Activated CD4-positive, alpha-beta memory T cell treated with anti-CD3 and anti-CD28 coated beads for 36 hours (primary cell): ENCODE measurements at regions of chr17 and their contacts with region 1.

Region 1: DNA sequence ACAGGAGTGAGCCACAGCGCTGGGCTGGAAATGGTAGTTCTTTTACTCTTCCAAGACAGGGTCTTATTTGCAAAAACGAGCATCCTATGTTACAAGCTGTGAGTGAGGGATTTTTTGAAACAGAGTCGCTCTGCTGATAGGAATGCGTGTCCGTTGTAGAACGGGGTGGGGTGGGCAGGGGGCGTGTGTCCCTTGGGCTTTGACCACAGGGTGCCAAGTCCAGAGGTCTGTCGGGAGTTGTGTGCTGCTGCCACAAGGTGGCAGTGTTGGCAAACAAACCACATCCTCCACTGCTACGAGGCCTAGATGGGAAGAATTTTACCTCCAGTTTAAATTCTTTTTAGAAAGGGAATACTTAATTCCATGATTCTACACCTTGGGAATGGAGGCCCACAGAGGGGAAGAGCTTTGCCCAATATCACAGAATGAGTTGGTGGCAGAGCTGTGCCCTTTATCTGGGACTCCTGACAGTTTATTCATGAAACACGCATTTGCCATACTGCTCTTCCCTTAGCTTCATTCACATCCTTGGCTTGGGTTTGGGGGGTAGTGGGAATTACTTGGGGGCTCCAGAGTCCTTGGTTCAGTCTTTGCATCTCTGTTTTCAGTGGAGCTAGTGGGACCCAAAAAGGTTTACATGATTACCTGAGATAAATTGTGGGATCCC is 30.6 kb upstream of the ETV4 start:
- DNase-seq: peak; percentile 76
- H3K4me3 Mint-ChIP-seq: no peak overlapping the region
- H3K27ac Mint-ChIP-seq: peak overlapping the region; percentile 44
- H3K4me1 Mint-ChIP-seq: peaks cover 15% of the 10 kb centered on the region
- H3K27me3 Mint-ChIP-seq: peaks cover 2% of the 10 kb centered on the region

Region 2: DNA sequence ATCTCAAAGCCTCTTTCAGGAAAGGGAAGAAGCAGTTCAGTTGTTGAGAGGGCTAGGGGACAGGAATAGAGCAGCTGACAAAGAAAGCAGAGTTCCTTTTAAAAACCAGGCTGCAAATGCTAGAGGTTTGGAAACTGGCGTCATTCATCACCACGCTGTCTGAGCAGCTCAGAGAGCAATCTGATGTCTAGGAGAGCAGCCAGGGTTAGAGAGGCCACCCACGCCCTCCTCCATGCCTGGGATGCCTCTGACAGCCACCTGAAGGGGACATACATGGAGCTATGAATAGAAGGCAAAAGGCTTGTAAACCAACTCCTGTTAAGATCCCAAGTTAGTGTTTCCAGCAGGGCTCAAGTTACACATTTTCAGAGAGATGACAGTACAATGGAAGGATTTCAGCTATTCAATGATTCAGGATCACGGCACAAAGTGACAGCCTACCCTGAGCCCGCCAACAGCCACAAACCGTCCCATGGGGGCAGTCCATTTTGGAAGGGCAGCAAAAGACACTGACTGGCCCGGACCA is 1434.3 kb before region 1 on chr17:
- CTCF ChIA-PET with region 1: no interaction called
- POLR2A ChIA-PET with region 1: no interaction called
- intact Hi-C with region 1: no loop called
- DNase-seq: no peak
- H3K4me3 Mint-ChIP-seq: no peak overlapping the region
- H3K27ac Mint-ChIP-seq: no peak overlapping the region
- H3K4me1 Mint-ChIP-seq: peaks cover 31% of the 10 kb centered on the region
- H3K27me3 Mint-ChIP-seq: no peaks in the 10 kb centered on the region

Region 3: DNA sequence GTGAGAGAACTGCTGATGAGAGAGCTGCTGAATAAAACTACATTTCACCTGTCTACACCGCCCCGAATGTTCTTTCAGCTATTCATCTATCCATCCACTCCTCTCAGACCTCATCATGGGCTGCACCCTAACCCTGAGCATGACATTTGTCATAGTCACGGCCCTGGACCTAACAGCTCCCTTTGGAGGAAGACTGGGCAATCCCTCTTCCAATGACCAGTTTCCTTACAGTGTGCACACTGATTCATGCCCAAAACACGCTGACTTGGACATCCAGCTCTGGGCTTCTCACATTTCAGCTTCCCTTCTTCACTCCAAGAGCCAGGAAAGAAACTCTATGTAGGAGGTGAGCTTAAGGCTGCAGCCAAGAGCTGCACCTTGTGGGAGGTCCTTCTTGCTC is 219.7 kb before region 1 on chr17:
- CTCF ChIA-PET with region 1: no interaction called
- POLR2A ChIA-PET with region 1: no interaction called
- intact Hi-C with region 1: no loop called
- DNase-seq: no peak
- H3K4me3 Mint-ChIP-seq: no peak overlapping the region
- H3K27ac Mint-ChIP-seq: no peak overlapping the region
- H3K4me1 Mint-ChIP-seq: peaks cover 27% of the 10 kb centered on the region
- H3K27me3 Mint-ChIP-seq: peaks cover 11% of the 10 kb centered on the region

Region 4: DNA sequence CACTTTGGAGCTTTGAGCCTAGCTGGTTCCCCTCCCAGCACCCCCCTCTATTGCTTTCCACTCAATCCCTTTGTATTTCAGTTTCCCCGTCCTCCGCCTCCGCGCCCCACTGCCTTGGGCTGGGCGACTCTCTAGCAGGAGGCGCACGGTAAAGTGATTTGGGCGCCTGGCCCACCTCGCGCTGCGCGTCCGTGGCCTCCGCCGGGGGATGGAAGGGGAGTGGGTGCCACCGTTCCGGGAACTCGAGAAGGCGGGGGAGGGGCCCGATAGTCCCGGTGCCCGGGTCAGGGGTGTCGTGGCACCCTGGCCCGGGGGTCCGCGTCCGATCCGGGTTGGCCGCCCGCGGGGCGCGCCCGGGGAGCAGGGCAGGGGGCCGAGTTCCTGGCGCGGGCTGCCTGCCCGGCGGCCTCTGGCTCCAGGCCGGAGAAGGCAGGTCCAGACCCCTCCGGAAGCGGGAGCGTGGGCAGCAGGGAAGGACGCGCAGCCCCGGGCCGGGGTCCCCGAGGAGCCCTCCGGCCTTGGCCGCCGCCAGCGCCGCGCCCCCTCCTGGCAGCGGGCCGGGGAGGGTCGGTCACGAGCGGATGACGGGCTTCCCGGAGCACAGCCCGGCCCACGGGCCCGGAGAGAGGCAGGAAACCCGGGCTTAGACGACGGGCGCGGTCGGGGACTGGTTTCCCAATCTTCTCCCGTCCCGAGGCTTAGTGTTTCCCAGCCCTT is 69.2 kb after region 1 on chr17:
- CTCF ChIA-PET with region 1: interaction called, 11 read pairs
- POLR2A ChIA-PET with region 1: interaction called, 4 read pairs
- intact Hi-C with region 1: no loop called
- DNase-seq: peak; percentile 34
- H3K4me3 Mint-ChIP-seq: no peak overlapping the region
- H3K27ac Mint-ChIP-seq: no peak overlapping the region
- H3K4me1 Mint-ChIP-seq: peaks cover 22% of the 10 kb centered on the region
- H3K27me3 Mint-ChIP-seq: peaks cover 5% of the 10 kb centered on the region

Region 5: DNA sequence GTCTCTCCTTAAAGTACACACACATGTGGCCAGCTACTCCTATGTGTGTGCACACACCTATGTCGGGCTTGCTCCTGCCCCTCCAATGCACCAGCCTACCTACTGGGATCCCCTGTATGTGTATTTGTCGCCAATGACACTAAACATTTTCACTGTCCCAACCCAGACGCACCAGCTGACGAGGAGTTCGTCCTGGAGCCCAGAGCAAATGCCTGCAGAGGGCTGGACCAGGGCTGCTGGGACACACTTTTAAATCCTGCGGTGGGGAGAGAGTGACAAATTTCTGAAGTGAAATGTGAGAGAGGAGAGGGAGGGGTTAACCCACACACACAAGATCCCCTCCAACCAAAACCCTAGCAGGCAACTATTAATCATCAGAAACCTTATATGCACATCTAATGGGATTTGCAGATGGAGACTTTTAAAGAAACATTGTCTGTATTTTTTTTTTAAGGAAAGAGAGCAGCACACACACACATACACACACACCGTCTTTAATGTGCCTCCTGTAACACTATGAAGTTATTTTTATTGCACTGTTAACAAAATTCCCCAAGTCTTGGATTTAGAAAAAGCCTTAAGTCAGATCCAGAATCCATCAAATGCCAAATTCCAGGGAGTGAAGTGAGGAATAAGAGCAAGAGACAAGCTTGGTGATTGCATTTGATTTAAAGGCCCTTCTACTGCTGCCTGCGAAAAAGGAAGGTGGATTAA is 85.2 kb after region 1 on chr17 and contains the start of gene MEOX1:
- CTCF ChIA-PET with region 1: interaction called, 16 read pairs
- POLR2A ChIA-PET with region 1: no interaction called
- intact Hi-C with region 1: no loop called
- DNase-seq: peak; percentile 66
- H3K4me3 Mint-ChIP-seq: peak within 1 kb of the TSS; percentile 64
- H3K27ac Mint-ChIP-seq: peak within 1 kb of the TSS; percentile 47
- H3K4me1 Mint-ChIP-seq: peaks cover 44% of the 10 kb centered on the region
- H3K27me3 Mint-ChIP-seq: peaks cover 3% of the 10 kb centered on the region
- total RNA-seq, gene MEOX1: 0.34 to 0.67 TPM

Region 6: DNA sequence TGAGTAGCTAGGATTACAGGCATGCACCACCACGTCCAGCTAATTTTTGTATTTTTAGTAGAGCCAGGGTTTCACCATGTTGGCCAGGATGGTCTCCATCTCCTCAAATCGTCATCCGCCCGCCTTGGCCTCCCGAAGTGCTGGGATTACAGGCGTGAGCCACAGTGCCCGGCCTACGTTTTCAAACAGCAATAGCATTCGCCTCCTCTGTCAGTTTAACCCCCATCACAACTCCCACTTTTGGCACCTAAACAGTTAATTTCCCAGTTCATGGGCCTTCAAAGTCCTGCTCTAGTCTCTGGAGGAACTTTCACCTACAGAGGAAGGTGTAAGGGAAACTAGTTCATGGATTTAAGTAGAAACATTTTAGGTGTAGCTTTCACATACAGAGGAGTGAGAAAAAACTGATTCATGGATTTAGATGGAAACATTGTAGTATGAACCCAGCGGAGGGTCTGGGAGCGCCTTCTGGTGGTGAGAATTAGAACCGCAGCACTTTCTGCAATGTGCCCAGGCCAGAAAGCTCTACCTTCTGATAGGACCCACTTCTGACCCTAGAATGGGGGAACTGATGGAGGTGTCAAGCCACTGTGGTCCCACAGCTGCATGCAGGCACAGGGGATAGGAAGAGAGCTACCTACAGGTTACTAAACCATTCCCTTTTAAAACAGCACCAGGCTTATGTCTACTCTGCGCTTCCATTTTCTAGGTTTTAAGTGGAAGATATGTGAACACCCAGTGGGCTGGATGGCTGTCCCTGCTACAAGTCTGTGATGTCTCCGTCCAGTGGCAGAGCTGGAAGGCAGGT is 97.0 kb after region 1 on chr17:
- CTCF ChIA-PET with region 1: interaction called, 7 read pairs
- POLR2A ChIA-PET with region 1: interaction called, 3 read pairs
- intact Hi-C with region 1: loop called (anchors 1 kb)
- DNase-seq: peak; percentile 85
- H3K4me3 Mint-ChIP-seq: no peak overlapping the region
- H3K27ac Mint-ChIP-seq: no peak overlapping the region
- H3K4me1 Mint-ChIP-seq: peaks cover 12% of the 10 kb centered on the region
- H3K27me3 Mint-ChIP-seq: no peaks in the 10 kb centered on the region

Region 7: DNA sequence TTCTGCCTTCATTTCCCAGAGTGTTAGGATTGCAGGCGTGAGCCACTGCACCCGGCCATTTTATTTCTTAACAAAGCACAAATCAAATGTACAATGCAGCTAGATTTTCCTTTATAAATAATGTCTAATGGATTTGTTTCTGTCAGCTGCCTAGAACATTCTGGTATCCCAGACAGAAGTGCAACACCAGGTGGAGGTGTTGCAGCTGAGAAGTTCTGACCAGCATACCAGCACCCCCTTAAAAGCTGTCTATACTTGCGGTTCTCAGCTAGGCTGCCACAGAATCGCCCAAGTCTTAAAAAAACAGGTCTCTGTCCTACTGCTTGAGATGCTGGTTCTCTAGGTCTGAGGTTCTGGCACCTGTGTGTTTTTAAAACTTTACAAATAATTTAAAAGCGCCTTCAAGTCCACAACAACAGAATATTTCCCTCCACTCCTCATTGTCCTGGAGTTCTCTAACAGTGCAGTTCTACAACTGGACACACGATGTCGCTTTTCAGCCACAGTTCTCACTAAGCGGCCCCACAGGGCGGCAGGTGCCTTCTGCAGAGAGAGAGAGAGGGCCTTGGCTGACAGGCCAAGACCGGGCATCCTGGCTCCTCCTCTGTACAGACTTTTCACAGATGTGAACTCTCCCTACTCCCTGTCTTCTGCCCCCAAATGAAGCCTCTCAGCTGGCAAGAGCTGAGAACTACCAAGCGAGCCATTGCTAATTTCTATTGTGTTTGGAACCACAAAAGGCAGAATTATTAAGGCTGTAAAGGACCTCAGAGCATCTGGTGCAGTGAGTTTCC is 117.6 kb after region 1 on chr17:
- CTCF ChIA-PET with region 1: interaction called, 17 read pairs
- POLR2A ChIA-PET with region 1: no interaction called
- intact Hi-C with region 1: no loop called
- DNase-seq: peak; percentile 82
- H3K4me3 Mint-ChIP-seq: peak overlapping the region; percentile 1
- H3K27ac Mint-ChIP-seq: no peak overlapping the region
- H3K4me1 Mint-ChIP-seq: no peaks in the 10 kb centered on the region
- H3K27me3 Mint-ChIP-seq: no peaks in the 10 kb centered on the region

Region 8: DNA sequence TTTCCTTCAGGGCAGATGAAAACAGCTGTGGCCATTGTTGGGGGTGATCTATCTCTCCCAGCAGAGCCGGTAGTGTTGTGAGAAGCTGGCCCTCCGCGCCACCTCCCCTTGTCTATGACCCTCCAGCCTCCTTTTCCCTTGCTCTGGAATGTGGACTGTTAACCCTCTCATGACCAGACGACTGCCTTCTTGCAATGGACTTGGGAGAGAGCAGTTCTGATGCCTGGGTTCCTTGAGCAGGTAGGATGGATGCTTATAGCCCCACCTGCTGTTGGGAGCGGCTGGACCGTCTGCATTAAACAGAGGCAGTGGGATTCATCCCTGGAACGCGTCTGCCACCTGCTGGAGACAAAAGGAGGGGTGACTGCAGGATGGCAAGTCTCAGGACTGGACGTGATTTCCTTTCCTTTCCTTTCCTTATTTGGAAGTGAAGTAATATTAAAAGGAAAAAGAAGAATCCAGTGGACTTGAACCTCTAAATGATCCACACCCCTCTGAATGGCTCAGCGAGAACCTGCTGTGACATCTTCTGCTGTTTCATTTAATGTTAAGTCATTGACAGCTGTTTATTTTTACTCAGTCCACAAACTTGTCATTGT is 183.7 kb after region 1 on chr17:
- CTCF ChIA-PET with region 1: interaction called, 42 read pairs
- POLR2A ChIA-PET with region 1: no interaction called
- intact Hi-C with region 1: loop called (anchors 1 kb)
- DNase-seq: peak; percentile 94
- H3K4me3 Mint-ChIP-seq: no peak overlapping the region
- H3K27ac Mint-ChIP-seq: no peak overlapping the region
- H3K4me1 Mint-ChIP-seq: no peaks in the 10 kb centered on the region
- H3K27me3 Mint-ChIP-seq: peaks cover 23% of the 10 kb centered on the region

Region 9: DNA sequence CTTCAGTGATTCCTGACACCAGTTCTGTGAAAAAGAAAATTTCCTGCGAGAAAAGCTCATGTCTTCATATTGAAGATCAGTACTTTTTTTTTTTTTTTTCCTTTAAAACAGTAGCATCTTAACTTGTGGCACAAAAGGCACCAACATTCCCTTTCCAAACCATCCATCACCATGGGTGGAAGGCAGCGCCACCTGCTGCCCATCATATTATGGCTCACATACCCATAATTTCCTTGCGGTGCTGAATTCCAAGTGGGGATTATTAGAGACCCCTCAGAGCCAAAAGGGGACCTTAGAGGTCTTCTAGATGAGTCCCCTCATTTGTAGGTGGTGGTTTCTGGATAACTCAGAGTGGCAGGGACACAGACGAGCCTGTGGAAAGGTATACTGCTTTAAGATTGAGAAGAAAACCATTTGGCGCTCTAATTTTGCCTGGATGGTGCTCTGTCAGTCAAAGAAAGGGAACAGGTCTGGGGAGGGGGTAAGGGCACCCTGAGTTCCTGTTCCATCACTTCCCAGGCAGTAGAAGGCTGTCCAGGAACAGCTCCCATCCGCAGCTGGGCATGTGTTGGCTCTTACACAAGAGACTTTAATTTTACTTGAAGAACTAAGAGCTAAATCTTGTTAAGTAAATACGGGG is 189.8 kb after region 1 on chr17:
- CTCF ChIA-PET with region 1: interaction called, 42 read pairs
- POLR2A ChIA-PET with region 1: no interaction called
- intact Hi-C with region 1: no loop called
- DNase-seq: peak; percentile 59
- H3K4me3 Mint-ChIP-seq: no peak overlapping the region
- H3K27ac Mint-ChIP-seq: no peak overlapping the region
- H3K4me1 Mint-ChIP-seq: no peaks in the 10 kb centered on the region
- H3K27me3 Mint-ChIP-seq: no peaks in the 10 kb centered on the region

Region 10: GRCh38 chr17:43823350-43824084 is 246.8 kb after region 1 on chr17:
- CTCF ChIA-PET with region 1: no interaction called
- POLR2A ChIA-PET with region 1: no interaction called
- intact Hi-C with region 1: no loop called
- DNase-seq: no peak
- H3K4me3 Mint-ChIP-seq: no peak overlapping the region
- H3K27ac Mint-ChIP-seq: no peak overlapping the region
- H3K4me1 Mint-ChIP-seq: no peaks in the 10 kb centered on the region
- H3K27me3 Mint-ChIP-seq: no peaks in the 10 kb centered on the region